Activated CD4-positive, alpha-beta memory T cell treated with anti-CD3 and anti-CD28 coated beads, Interleukin-2, amount 10 ng/mL, durations not matched to agents 7 days and 5 days (primary cell): ENCODE measurements at regions of chr3 and their contacts with region 1.

Region 1: GRCh38 chr3:11626084-11626463 is 17.6 kb downstream of the VGLL4 start:
- DNase-seq: peak; percentile 36
- H3K4me3 Mint-ChIP-seq: peak overlapping the region; percentile 18
- H3K27ac Mint-ChIP-seq: peak overlapping the region; percentile 91
- H3K4me1 Mint-ChIP-seq: peaks cover 61% of the 10 kb centered on the region
- H3K27me3 Mint-ChIP-seq: no peaks in the 10 kb centered on the region

Region 2: DNA sequence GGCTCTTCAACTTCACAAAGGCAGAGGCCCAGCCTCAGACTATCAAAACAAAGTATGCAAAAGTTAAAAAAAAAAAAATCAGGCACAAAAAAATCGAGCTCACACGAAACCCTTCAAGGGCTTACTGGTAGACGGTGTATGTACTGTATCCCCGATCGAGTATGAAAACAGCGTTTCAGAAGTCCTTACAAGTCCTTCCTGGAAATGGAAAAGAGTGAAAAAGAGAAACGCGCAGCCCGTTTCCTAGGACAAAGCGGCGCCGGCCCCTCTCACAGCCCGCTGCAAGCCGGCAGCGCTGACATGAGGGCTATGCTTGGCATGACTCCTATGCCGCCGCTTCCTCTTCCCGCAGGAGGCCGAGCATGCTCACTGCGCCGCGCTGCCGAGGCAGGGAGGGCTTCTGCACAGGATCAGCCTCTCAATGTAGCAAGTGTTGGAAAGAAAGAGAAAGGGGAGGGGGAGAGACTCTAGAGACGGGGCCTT is 17.6 kb after region 1 on chr3 and contains the start of gene VGLL4:
- CTCF ChIA-PET with region 1: interaction called, 10 read pairs
- POLR2A ChIA-PET with region 1: interaction called, 51 read pairs
- DNase-seq: peak; percentile 72
- H3K4me3 Mint-ChIP-seq: peak within 1 kb of the TSS; percentile 93
- H3K27ac Mint-ChIP-seq: peak within 1 kb of the TSS; percentile 94
- H3K4me1 Mint-ChIP-seq: peaks cover 35% of the 10 kb centered on the region
- H3K27me3 Mint-ChIP-seq: peaks cover 2% of the 10 kb centered on the region
- total RNA-seq, gene VGLL4: 47.8 to 49.2 TPM

Region 3: DNA sequence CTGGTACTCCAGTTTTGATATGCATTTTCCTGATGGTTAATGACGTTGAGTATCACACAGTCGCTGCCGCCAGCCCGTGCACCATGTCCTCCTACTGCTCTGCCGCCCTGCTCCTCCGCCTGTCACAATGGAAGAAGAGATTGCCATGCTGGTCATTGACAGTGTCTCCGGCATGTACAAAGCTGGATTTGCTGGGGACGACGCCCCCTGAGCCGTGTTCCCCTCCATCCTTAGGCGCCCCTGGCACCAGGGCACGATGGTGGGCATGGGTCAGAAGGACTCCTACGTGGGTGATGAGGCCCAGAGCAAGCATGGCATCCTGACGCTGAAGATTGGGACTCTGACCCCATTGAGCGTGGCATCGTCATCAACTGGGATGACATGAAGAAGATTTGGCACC is 444.0 kb after region 1 on chr3:
- CTCF ChIA-PET with region 1: no interaction called
- POLR2A ChIA-PET with region 1: no interaction called
- DNase-seq: no peak
- H3K4me3 Mint-ChIP-seq: no peak overlapping the region
- H3K27ac Mint-ChIP-seq: no peak overlapping the region
- H3K4me1 Mint-ChIP-seq: no peaks in the 10 kb centered on the region
- H3K27me3 Mint-ChIP-seq: peaks cover 5% of the 10 kb centered on the region